ENCODE measurements at regions of chr15 and their contacts with region 1.

Region 1: GRCh38 chr15:68154923-68155559 is 50.1 kb downstream of the CALML4 start:
- DNase-seq: peak in 1 of 2 donors; percentile 37
- H3K4me3 ChIP-seq: no peak overlapping the region
- H3K27ac ChIP-seq: no peak overlapping the region
- H3K4me1 ChIP-seq: peaks cover 0 to 36% (median 3%) of the 10 kb centered on the region in 4 donors
- H3K27me3 ChIP-seq: no peaks in the 10 kb centered on the region
- CTCF ChIP-seq: peak; percentile 65 to 77

Region 2: DNA sequence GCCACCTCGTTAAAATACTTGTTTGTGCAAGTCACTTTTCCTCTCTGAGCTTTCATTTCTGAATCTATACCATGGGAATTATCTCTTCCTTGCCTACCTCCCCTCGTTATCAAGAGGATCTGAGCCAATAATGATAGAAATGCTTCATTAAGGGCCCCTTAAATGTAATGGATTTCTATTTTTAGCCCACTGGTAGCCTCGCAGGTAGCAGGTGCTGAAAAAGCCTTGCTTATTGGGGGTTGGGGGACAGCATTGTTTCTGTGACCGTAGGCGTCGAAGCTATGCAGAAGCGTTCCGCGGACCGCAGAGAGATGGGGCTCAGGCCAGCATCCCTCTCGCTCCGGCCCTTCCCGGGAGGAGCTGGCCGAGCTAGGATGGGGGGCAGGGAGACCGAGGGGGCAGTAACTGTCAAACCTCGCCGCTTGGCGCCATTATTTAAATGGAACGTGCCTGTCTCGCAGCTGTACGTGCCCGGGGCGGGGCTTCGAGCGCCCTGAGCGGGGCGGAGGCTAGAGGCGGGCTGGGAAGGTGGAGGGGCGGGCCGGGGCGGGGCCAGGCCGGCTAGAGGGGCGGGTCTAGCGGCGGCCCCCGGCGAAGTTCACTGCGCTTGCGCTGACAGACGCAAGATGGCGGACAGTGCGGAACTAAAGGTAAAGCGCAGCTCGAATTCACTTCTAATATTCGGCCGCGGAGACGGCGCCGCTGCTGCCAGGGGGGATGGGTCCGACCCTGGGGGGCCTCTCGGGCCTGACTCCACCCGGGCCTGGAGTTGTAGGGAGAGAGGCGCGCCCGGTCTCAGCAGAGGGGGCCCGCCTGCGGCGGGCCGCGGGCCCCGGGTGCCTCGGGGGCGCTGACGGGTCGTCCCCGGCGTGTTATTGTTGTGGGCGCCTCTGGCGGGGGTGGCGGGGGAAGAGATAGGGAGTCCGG is 101.1 kb before region 1 on chr15 and contains the start of gene PIAS1:
- intact Hi-C with region 1: loop called (anchors 10 kb)
- DNase-seq: peak; percentile 95 to 96
- H3K4me3 ChIP-seq: peak within 1 kb of the TSS; percentile 97 to 98
- H3K27ac ChIP-seq: peak within 1 kb of the TSS; percentile 92 to 94
- H3K4me1 ChIP-seq: peaks cover 0 to 37% (median 19%) of the 10 kb centered on the region in 4 donors
- H3K27me3 ChIP-seq: no peaks in the 10 kb centered on the region
- CTCF ChIP-seq: no peak